ENCODE measurements at regions of chr1 and their contacts with region 1.

Region 1: GRCh38 chr1:154335025-154335714 is 9.8 kb downstream of the ATP8B2 start:
- DNase-seq: peak; percentile 88
- ATAC-seq: peak; percentile 87
- H3K4me3 ChIP-seq: peak overlapping the region in 2 of 3 experiments; percentile 17 to 25; a peak in 2 of 6 replicates
- H3K27ac ChIP-seq: peak overlapping the region; percentile 81
- H3K4me1 ChIP-seq: peaks cover 35% of the 10 kb centered on the region
- H3K27me3 ChIP-seq: no peaks in the 10 kb centered on the region
- CTCF ChIP-seq: peak; percentile 90
- EP300 ChIP-seq: no peak
- POLR2A ChIP-seq: no peak
- RAD21 ChIP-seq: peak; percentile 85

Region 2: GRCh38 chr1:154198756-154199562 is 136.2 kb before region 1 on chr1:
- CTCF ChIA-PET with region 1: interaction called, 4 read pairs
- POLR2A ChIA-PET with region 1: interaction called, 6 read pairs
- in situ Hi-C with region 1: no loop called
- intact Hi-C with region 1: loop called (anchors 10 kb)
- DNase-seq: peak; percentile 71
- ATAC-seq: peak; percentile 75
- H3K4me3 ChIP-seq: peak overlapping the region in 2 of 3 experiments; percentile 51 to 56; a peak in 3 of 6 replicates
- H3K27ac ChIP-seq: peak overlapping the region; percentile 43
- H3K4me1 ChIP-seq: peaks cover 46% of the 10 kb centered on the region
- H3K27me3 ChIP-seq: peaks cover 0 to 8% of the 10 kb centered on the region in 2 experiments; a peak in 3 of 5 replicates
- CTCF ChIP-seq: peak; percentile 68
- EP300 ChIP-seq: no peak
- POLR2A ChIP-seq: no peak
- RAD21 ChIP-seq: no peak

Region 3: DNA sequence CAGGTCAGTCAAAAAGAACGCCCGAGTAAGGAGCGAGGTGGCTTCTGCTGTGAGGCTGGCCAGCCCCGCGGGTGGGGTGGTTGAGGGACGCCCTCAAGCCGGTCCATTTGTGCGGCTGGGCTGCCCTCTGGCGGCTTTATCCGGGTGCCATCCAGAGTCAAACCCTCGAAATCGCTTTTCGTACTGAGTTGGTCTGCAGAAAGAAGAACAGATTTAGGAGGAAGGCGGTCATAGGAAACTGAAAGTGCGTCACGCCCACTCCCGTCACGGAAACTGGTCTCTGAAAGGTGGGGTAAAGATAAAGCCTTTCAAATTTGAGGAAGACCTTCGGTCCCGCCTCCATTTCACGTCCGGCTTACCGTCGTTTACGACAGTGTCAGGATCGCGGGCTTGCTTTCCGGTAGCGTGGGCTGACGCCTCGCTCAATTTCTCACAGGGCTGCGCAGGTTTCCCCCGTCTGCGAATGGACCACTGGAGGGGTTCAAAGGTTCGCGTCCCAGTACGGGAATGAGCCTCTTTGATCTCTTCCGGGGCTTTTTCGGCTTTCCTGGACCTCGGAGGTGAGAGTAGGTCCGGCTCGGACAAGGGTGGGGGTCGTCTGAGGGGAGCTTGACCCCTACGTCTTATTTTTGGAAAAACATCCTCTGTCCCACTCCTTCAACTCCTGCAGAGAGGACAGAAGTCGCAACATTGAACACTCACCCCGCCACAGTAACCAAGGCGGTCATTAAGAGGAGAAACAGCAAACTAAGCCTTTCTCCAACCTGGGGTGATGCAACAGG is 62.8 kb before region 1 on chr1 and contains the start of gene HAX1:
- CTCF ChIA-PET with region 1: interaction called, 6 read pairs
- POLR2A ChIA-PET with region 1: interaction called, 5 read pairs
- in situ Hi-C with region 1: no loop called
- intact Hi-C with region 1: loop called (anchors 1 kb)
- DNase-seq: peak; percentile 89
- ATAC-seq: peak; percentile 94
- H3K4me3 ChIP-seq: peak within 1 kb of the TSS; percentile 86 to 97 (median 90)
- H3K27ac ChIP-seq: peak within 1 kb of the TSS; percentile 69
- H3K4me1 ChIP-seq: peaks cover 12% of the 10 kb centered on the region
- H3K27me3 ChIP-seq: no peaks in the 10 kb centered on the region; a peak in 1 of 5 replicates
- CTCF ChIP-seq: peak; percentile 94
- EP300 ChIP-seq: peak in 1 of 2 experiments; percentile 23; a peak in 2 of 4 replicates
- POLR2A ChIP-seq: peak; percentile 42 to 58; a peak in 3 of 4 replicates
- RAD21 ChIP-seq: peak; percentile 92
- total RNA-seq, gene HAX1: 89.2 and 104 TPM in 2 replicates

Region 4: DNA sequence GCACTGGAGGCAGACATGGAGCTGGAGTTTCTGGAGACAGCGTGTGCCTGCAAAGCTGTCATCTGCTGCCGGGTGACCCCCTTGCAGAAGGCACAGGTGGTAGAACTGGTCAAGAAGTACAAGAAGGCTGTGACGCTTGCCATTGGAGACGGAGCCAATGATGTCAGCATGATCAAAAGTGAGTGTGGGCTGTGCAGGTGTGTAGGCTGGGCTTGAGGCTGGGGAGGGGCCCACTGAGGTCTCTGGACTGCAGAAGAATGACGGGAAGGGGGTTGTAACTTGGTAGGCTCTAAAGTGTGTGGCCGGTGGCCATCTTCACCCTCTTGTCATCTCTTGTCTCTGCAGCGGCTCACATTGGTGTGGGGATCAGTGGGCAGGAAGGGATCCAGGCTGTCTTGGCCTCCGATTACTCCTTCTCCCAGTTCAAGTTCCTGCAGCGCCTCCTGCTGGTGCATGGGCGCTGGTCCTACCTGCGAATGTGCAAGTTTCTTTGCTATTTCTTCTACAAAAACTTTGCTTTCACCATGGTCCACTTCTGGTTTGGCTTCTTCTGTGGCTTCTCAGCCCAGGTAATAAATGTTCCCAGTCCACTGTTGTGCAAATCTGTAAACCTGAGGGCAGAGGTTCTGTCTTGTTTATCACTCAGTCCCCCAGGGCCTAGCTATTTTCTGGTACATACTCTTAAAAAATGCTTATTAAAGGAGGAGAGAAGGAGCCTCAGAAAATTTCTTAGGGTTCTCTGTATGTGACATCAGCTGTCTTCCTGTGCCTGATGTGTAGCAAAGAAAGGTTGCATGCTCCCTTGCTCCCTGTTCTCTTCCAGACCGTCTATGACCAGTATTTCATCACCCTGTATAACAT is 10.0 kb after region 1 on chr1:
- CTCF ChIA-PET with region 1: no interaction called
- POLR2A ChIA-PET with region 1: interaction called, 15 read pairs
- in situ Hi-C with region 1: no loop called
- intact Hi-C with region 1: no loop called
- DNase-seq: peak; percentile 44
- ATAC-seq: peak; percentile 50
- H3K4me3 ChIP-seq: no peak overlapping the region
- H3K27ac ChIP-seq: no peak overlapping the region
- H3K4me1 ChIP-seq: no peaks in the 10 kb centered on the region
- H3K27me3 ChIP-seq: no peaks in the 10 kb centered on the region
- CTCF ChIP-seq: peak; percentile 58
- EP300 ChIP-seq: no peak
- POLR2A ChIP-seq: no peak
- RAD21 ChIP-seq: peak; percentile 50; the same call in 1 of the 2 replicates

Region 5: DNA sequence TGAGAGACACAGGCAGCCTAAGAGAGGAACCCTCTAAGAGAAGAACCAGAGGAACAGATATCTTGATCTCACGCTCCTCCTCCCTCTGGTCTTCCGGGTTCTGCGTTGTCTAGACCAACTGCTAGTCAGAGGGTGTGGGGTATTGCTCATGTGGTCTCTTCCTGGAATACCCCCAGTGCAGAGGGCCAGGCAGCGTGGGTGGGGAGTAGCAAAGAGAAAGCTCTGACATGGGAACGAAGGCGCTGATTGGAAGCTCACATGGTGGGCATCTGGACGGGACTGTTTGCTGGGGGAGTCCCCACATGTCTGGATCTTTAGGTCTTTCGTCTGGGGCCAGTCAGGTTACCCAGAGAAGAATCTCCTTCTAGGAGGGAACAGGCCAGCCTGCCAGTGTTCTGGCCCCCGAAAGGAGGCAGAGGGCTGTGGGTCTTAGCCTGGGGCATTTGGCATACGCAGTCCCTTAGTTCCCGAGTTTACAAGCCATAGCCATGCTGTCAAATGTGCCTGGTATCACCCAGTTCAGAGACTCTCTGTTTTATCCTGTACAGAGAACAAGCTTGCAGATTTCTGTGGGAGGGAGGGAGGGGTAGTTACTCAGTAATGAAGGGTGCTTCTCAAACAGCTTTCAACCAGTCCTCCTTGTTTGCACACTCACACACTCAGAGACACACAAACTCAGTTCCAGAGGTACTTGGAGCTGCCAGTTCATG is 51.6 kb after region 1 on chr1:
- CTCF ChIA-PET with region 1: no interaction called
- POLR2A ChIA-PET with region 1: interaction called, 19 read pairs
- in situ Hi-C with region 1: no loop called
- intact Hi-C with region 1: no loop called
- DNase-seq: peak; percentile 77
- ATAC-seq: peak; percentile 95
- H3K4me3 ChIP-seq: peak overlapping the region; percentile 48 to 77 (median 51)
- H3K27ac ChIP-seq: peak overlapping the region; percentile 24
- H3K4me1 ChIP-seq: peaks cover 35% of the 10 kb centered on the region
- H3K27me3 ChIP-seq: no peaks in the 10 kb centered on the region
- CTCF ChIP-seq: no peak
- EP300 ChIP-seq: no peak
- POLR2A ChIP-seq: peak in 1 of 2 experiments; percentile 37; a peak in 1 of 4 replicates
- RAD21 ChIP-seq: no peak

Region 6: GRCh38 chr1:154405762-154406571 is 70.8 kb after region 1 on chr1:
- CTCF ChIA-PET with region 1: no interaction called
- POLR2A ChIA-PET with region 1: no interaction called
- in situ Hi-C with region 1: no loop called
- intact Hi-C with region 1: no loop called
- DNase-seq: peak; percentile 44
- ATAC-seq: peak; percentile 73
- H3K4me3 ChIP-seq: peak overlapping the region; percentile 55 to 89 (median 71)
- H3K27ac ChIP-seq: peak overlapping the region; percentile 62
- H3K4me1 ChIP-seq: peaks cover 90% of the 10 kb centered on the region
- H3K27me3 ChIP-seq: peaks cover 0 to 22% of the 10 kb centered on the region in 2 experiments; a peak in 4 of 5 replicates
- CTCF ChIP-seq: peak; percentile 88
- EP300 ChIP-seq: no peak
- POLR2A ChIP-seq: peak in 1 of 2 experiments; percentile 50; a peak in 2 of 4 replicates
- RAD21 ChIP-seq: peak; percentile 72